Gastrocnemius medialis (tissue), 4 donors: ENCODE measurements at regions of chrX and their contacts with region 1.

Region 1: DNA sequence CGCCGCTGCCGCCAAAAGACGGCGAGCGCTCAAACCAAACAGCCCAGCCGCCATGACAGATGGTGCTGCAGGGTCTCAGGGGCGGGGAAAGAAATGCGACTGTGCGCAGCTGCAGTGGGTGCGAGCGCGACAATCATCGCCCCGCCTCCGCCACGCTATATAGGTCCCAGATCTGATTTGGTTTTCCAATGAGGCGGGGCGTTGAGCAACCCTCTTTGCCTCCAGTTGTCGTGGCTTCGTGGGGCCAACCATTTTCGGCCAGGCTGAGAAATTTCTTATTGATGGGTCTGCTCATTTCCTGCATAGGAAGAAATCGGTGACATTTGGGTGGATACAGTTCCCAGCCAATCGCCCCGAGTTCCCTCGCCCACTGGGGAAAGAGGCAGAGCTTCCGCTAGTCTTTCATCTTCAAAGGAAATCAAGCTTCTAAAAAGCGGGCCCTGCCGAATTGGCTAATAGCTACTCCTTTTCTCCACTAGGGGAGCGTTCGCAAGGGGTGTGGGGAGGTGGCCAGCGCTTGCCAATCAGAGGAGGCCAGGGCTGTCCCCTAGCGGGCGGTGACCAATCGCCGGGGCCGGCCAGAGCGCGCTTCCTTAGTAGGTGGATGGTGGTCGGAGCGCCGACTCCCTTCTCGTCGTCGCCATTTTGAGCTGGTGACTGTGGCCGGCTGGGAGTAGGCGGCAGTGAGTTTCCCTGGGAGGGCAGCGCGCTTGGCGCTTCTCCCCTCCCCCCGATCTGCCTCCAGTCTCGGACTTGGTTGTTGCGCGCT is at the starts of genes NDUFB11 and RBM10:
- DNase-seq: peak; percentile 92 to 95
- ATAC-seq: peak; percentile 86 to 91
- H3K4me3 ChIP-seq: peak within 1 kb of the TSS; percentile 78 to 96 (median 82)
- H3K27ac ChIP-seq: peak within 1 kb of the TSS; percentile 95 to 99 (median 96)
- H3K4me1 ChIP-seq: peaks cover 8 to 12% of the 10 kb centered on the region in 2 donors
- H3K27me3 ChIP-seq: no peaks in the 10 kb centered on the region
- CTCF ChIP-seq: peak; percentile 73 to 89 (median 83)
- POLR2A ChIP-seq: peak; percentile 72 to 77
- total RNA-seq, gene NDUFB11: 105 to 172 (median 168) TPM
- total RNA-seq, gene RBM10: 18.7 to 49.3 (median 23.5) TPM

Region 2: GRCh38 chrX:47129157-47129898 is 15.5 kb before region 1 on chrX:
- in situ Hi-C with region 1: no loop called
- intact Hi-C with region 1: loop called (anchors 1 kb)
- DNase-seq: peak; percentile 84 to 95
- ATAC-seq: peak; percentile 100
- H3K4me3 ChIP-seq: peak overlapping the region; percentile 62 to 70 (median 70)
- H3K27ac ChIP-seq: peak overlapping the region; percentile 83 to 88 (median 87)
- H3K4me1 ChIP-seq: peaks cover 0 to 4% of the 10 kb centered on the region in 2 donors
- H3K27me3 ChIP-seq: no peaks in the 10 kb centered on the region
- CTCF ChIP-seq: no peak
- POLR2A ChIP-seq: peak in 1 of 2 donors; percentile 29